Astrocyte of the cerebellum (primary cell): ENCODE measurements at regions of chr5 and their contacts with region 1.

Region 1: GRCh38 chr5:3036041-3036788 is 284.7 kb upstream of the IRX2 start:
- DNase-seq: no peak
- H3K4me3 ChIP-seq: no peak overlapping the region
- CTCF ChIP-seq: no peak

Region 2: DNA sequence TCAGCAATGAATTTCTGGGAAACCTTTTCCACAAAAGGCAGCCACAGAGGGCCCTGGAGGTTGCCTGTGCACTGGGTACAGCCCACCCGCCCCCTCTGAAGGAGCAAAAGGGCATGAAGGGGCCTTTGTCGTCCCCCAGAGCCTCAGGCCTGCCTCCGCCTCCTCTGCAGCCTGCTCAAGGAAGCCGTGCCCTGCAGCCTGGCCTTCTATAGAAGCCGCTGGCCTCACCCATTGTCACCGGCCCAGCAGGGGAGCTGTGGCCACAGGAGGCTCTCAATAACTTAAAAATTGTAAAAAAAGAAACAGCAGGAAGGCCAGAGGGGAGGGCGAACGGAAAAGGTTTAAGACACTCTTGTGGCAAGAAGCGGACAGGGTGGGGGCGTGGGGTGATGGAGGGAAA is 498.0 kb before region 1 on chr5:
- in situ Hi-C with region 1: no loop called
- DNase-seq: no peak
- H3K4me3 ChIP-seq: no peak overlapping the region
- CTCF ChIP-seq: no peak

Region 3: DNA sequence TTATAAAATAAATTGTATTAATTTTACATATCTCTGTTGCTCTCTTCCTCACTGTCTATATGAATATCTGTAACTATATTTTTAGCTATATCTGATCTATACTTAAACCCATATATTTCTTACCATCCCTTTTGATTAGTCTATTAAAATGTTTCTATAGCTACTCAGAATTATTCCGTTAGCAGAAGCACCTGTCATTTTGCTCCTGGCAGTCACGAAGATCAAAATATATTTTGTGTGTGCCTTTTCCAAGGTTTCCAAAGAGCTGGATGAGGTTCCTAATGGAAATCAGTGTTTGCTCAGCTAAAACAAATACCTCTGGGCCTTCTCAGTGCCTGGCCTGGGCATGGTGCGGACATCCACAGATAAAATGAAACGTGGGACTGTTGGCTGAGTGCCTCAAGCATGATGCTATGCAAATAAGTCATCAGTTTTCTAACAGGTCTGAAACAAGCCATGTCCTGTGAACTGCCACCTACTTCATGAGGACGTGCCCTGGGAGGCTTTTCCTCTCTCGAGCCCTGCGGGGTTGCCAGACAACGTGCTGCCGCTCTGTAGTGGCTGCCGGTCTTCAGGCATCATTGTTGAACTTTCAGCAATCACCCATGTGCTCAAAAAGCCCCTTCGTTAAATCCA is 44.5 kb before region 1 on chr5:
- in situ Hi-C with region 1: loop called (anchors 5 kb)
- DNase-seq: no peak
- H3K4me3 ChIP-seq: no peak overlapping the region
- CTCF ChIP-seq: no peak

Region 4: GRCh38 chr5:3139499-3139931 is 103.3 kb after region 1 on chr5:
- in situ Hi-C with region 1: no loop called
- DNase-seq: peak; percentile 26
- H3K4me3 ChIP-seq: no peak overlapping the region
- CTCF ChIP-seq: no peak

Region 5: DNA sequence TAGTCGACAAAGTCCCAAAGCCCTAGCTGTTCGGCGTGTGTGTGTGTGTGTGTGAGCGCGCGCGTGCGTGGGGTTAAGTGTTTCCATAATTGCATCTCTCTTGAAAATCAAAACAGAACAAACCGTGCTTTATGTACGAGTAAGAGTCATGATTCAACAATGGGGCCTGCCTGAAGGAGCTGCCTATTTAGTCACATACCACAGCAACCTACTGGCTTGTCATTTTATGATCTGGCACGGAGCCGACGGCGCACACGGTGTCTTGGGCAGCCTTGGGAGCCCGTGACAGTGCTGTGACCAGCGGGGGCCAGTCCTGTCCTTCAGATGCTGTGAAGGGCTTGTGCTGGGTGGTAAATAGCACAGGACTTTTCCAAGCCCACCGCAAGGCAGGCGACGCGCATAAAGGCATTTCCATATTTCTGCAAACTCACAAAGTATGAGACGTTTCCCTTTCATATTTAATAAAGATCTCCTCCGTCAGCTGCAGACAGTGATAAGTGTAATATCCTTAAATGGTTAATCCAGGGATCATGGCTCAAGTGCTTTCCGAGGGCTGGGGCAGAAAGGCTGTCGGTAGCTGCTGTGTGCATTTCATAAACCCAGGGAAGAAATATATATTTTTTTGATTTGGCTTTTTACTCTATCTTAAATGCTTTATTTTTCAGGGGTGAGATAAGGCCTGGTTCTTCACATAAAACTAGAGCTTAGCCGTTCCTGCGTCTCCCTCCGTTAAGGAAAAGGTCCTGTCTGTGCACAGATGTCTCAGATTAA is 289.2 kb after region 1 on chr5:
- in situ Hi-C with region 1: no loop called
- DNase-seq: no peak
- H3K4me3 ChIP-seq: no peak overlapping the region
- CTCF ChIP-seq: no peak